Heart left ventricle (tissue), 16 donors: ENCODE measurements at regions of chr14 and their contacts with region 1.

Region 1: GRCh38 chr14:74934476-74935359 is 11.7 kb upstream of the RPS6KL1 start:
- DNase-seq: peak; percentile 55 to 82 (median 59)
- ATAC-seq: peak; percentile 11 to 72 (median 66)
- H3K4me3 ChIP-seq: no peak overlapping the region
- H3K27ac ChIP-seq: peak overlapping the region in 11 of 12 donors; percentile 3 to 63 (median 32)
- H3K4me1 ChIP-seq: peaks cover 0 to 54% (median 43%) of the 10 kb centered on the region in 12 donors
- H3K27me3 ChIP-seq: no peaks in the 10 kb centered on the region
- CTCF ChIP-seq: no peak
- POLR2A ChIP-seq: no peak

Region 2: GRCh38 chr14:74913986-74914573 is 20.6 kb before region 1 on chr14:
- intact Hi-C with region 1: loop called in 1 of 10 experiments (anchors 2 kb)
- DNase-seq: peak in 4 of 5 donors; percentile 75 to 78 (median 76)
- ATAC-seq: peak; percentile 44 to 68 (median 60)
- H3K4me3 ChIP-seq: no peak overlapping the region
- H3K27ac ChIP-seq: peak overlapping the region in 8 of 12 donors; percentile 23 to 70 (median 33)
- H3K4me1 ChIP-seq: peaks cover 0 to 55% (median 40%) of the 10 kb centered on the region in 12 donors
- H3K27me3 ChIP-seq: no peaks in the 10 kb centered on the region
- CTCF ChIP-seq: peak; percentile 64 to 87 (median 76)
- POLR2A ChIP-seq: no peak